Transverse colon (tissue), 4 donors: ENCODE measurements at regions of chr2 and their contacts with region 1.

Region 1: GRCh38 chr2:47174733-47175361 is 19.7 kb upstream of the STPG4 start:
- DNase-seq: peak; percentile 82
- H3K4me3 ChIP-seq: peak overlapping the region; percentile 62 to 92 (median 78)
- H3K27ac ChIP-seq: peak overlapping the region; percentile 99 to 100 (median 100)
- H3K4me1 ChIP-seq: peaks cover 32 to 70% (median 52%) of the 10 kb centered on the region in 4 donors
- H3K27me3 ChIP-seq: no peaks in the 10 kb centered on the region
- CTCF ChIP-seq: no peak
- EP300 ChIP-seq: no peak
- POLR2A ChIP-seq: peak; percentile 43

Region 2: GRCh38 chr2:45712570-45712969 is 1462.3 kb before region 1 on chr2:
- in situ Hi-C with region 1: no loop called
- intact Hi-C with region 1: no loop called
- DNase-seq: peak; percentile 26
- H3K4me3 ChIP-seq: no peak overlapping the region
- H3K27ac ChIP-seq: no peak overlapping the region
- H3K4me1 ChIP-seq: no peaks in the 10 kb centered on the region
- H3K27me3 ChIP-seq: no peaks in the 10 kb centered on the region
- CTCF ChIP-seq: no peak
- EP300 ChIP-seq: no peak
- POLR2A ChIP-seq: no peak

Region 3: DNA sequence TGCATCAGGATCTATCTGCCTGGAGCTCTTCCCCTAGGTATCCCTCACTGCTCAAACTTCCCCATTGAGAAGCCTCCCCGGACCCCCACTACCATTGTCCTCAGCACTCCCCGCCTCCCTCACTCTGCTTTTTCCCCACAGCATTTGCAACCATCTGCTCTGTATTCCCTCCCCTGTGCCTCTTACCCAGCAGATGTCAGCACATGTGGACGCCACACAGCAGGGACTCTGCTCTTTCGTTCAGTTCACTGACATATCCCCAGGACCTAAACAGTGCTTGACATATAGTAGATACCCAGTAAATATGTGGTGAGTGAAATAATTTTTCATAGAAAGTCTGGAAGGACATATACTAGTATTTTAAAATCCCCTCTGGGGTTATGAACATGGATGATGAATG is 594.4 kb before region 1 on chr2:
- in situ Hi-C with region 1: no loop called
- intact Hi-C with region 1: no loop called
- DNase-seq: no peak
- H3K4me3 ChIP-seq: no peak overlapping the region
- H3K27ac ChIP-seq: no peak overlapping the region
- H3K4me1 ChIP-seq: peaks cover 0 to 2% (median 0%) of the 10 kb centered on the region in 4 donors
- H3K27me3 ChIP-seq: no peaks in the 10 kb centered on the region
- CTCF ChIP-seq: no peak
- EP300 ChIP-seq: no peak
- POLR2A ChIP-seq: no peak

Region 4: DNA sequence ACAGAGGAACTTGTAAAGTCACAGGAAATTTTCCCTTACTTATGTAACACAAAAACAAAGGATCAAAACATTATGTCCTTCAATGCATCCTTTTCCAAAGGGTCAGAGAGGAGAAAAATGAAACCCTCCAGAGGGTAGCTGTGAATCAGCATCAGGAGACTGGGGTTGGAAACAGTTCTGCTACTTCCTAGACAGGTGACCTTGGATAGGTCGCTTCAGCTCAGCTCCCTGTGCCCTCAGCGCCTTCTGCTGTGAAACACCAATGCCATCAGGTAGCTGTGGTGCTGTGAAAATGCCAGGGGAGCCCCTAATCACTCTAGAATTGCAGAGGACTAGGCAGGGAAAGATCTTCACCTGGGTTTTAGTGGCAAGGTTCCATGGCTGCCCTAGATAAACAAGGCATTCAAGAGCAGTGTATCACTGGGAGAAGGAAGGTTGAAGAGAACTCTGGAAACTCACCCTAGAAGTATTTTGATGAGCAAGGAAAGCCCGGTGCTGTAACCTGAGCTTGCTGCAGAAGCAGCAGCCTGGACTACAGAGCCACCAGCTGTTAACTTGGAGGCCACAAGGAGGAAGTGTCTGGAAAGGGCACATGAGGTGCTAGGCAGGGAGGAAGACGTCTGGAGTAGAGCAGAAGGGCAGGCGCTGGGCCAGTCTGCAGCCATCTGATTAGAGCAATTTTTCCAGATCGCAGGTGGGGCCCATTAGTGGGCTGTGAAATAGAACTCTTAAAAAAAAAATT is 158.5 kb before region 1 on chr2:
- in situ Hi-C with region 1: loop called in 1 of 4 experiments (anchors 25 kb)
- intact Hi-C with region 1: no loop called
- DNase-seq: peak; percentile 19
- H3K4me3 ChIP-seq: no peak overlapping the region
- H3K27ac ChIP-seq: peak overlapping the region; percentile 36 to 74 (median 69)
- H3K4me1 ChIP-seq: peaks cover 0 to 20% (median 16%) of the 10 kb centered on the region in 4 donors
- H3K27me3 ChIP-seq: no peaks in the 10 kb centered on the region
- CTCF ChIP-seq: peak in 1 of 5 experiments; percentile 33
- EP300 ChIP-seq: no peak
- POLR2A ChIP-seq: no peak

Region 5: DNA sequence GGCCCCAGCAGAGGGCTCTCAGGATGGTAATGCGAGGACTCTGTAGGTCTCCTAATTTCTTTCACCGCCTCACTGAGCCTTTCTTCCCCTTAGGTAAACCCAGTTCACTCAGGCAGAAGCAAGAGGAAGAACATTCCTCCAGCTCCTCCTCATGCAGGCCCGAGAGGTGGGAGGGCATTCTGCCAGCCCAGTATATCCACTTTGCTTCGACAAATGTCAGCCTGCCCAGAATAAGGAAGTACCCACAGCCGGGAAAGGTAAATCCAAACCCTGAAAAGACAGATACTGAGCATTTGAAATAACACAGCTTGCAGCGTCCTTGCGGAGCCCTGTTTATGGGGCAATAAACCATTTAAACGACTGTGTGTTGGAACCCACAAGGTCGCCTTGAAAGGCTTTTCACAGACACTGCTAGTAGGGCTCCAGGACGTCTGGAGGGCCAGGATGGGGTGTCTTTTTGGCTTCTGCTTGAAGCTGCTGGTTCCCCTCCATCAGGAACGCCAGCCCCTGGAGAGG is 43.3 kb after region 1 on chr2:
- in situ Hi-C with region 1: no loop called
- intact Hi-C with region 1: no loop called
- DNase-seq: peak; percentile 79
- H3K4me3 ChIP-seq: peak overlapping the region in 1 of 4 donors; percentile 29
- H3K27ac ChIP-seq: peak overlapping the region; percentile 82 to 88 (median 83)
- H3K4me1 ChIP-seq: peaks cover 7 to 36% (median 21%) of the 10 kb centered on the region in 4 donors
- H3K27me3 ChIP-seq: no peaks in the 10 kb centered on the region
- CTCF ChIP-seq: peak in 1 of 5 experiments; percentile 1
- EP300 ChIP-seq: no peak
- POLR2A ChIP-seq: no peak

Region 6: DNA sequence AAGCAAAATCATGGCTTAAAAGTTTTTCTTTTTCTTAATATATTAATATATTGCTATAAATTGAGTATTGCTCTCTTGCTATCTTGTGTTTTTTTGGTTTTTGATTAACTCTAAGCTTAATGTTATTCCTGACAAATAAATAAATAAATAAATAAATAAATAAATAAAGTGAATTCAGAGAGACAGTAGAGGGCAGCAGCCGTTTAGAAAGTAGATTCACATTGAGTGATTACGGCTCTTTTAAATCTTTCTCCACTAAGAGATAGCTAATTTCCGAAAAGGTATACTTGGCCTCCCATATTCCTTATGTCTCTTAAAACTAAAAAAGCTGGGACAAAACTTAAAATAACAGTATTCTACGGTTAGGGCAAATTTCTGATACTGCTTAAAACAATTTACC is 262.4 kb after region 1 on chr2:
- in situ Hi-C with region 1: no loop called
- intact Hi-C with region 1: no loop called
- DNase-seq: no peak
- H3K4me3 ChIP-seq: no peak overlapping the region
- H3K27ac ChIP-seq: no peak overlapping the region
- H3K4me1 ChIP-seq: no peaks in the 10 kb centered on the region
- H3K27me3 ChIP-seq: no peaks in the 10 kb centered on the region
- CTCF ChIP-seq: peak in 4 of 5 experiments; percentile 27 to 31 (median 30)
- EP300 ChIP-seq: no peak
- POLR2A ChIP-seq: no peak